Transverse colon (tissue), 4 donors: ENCODE measurements at regions of chr15 and their contacts with region 1.

Region 1: GRCh38 chr15:42723054-42723453 is 13.9 kb downstream of the CDAN1 start:
- DNase-seq: no peak
- H3K4me3 ChIP-seq: no peak overlapping the region
- H3K27ac ChIP-seq: no peak overlapping the region
- H3K4me1 ChIP-seq: no peaks in the 10 kb centered on the region
- H3K27me3 ChIP-seq: no peaks in the 10 kb centered on the region
- CTCF ChIP-seq: no peak
- EP300 ChIP-seq: no peak
- POLR2A ChIP-seq: no peak

Region 2: GRCh38 chr15:42679285-42680141 is 43.5 kb before region 1 on chr15:
- in situ Hi-C with region 1: no loop called
- intact Hi-C with region 1: loop called (anchors 2 kb)
- DNase-seq: no peak
- H3K4me3 ChIP-seq: no peak overlapping the region
- H3K27ac ChIP-seq: no peak overlapping the region
- H3K4me1 ChIP-seq: no peaks in the 10 kb centered on the region
- H3K27me3 ChIP-seq: no peaks in the 10 kb centered on the region
- CTCF ChIP-seq: no peak
- EP300 ChIP-seq: no peak
- POLR2A ChIP-seq: no peak